Ovary (tissue), 10 donors: ENCODE measurements at regions of chr10 and their contacts with region 1.

Region 1: GRCh38 chr10:110137142-110137545 is 70.3 kb upstream of the MXI1 start:
- DNase-seq: no peak
- H3K4me3 ChIP-seq: no peak overlapping the region
- H3K27ac ChIP-seq: no peak overlapping the region
- H3K4me1 ChIP-seq: peaks cover 3% of the 10 kb centered on the region
- H3K27me3 ChIP-seq: no peaks in the 10 kb centered on the region
- CTCF ChIP-seq: peak; percentile 41 to 94 (median 89)
- EP300 ChIP-seq: no peak
- POLR2A ChIP-seq: peak; percentile 11

Region 2: DNA sequence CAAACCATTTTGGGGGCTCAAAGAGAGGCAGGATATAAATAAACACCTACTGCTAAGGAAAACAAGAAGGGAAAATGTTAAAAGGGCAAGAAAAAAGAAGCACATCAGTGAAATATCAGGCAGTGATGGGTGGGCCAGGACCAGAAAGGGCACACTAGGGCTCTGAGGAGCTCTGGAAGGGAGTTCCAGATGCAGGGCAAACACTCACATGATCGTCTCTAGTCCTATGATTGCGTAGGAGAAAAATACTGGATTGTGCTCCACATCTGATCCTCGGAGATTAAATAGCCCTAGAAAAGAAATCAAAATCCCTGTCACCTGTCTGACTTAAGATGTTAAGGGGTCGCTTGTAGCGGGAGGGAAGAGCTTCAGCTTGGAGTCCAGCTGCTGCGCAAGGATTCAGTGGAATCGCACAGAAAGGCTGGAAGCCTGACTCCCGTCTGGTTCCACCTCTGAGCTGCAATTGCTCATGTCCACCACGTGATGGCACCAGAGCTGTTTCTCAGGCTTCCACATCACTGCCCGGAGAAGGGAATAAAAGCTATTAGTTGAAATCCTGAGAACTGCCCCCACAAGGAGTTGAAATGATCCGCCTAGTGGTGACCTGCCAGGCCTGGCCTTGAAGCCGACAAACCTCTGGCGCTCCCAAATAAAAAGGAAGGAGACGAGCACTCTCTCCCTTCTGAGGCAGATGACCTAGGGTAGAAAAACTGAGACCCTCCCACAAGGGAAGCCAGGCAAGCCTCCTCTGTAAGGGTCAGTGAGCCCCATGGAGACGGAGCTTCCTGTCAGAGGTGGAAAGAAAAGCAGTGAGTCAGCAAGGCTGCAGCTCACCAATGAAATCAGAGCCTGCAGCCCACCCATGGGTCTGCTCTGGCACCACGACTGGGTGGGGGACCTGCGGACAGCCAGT is 253.0 kb before region 1 on chr10:
- intact Hi-C with region 1: loop called (anchors 5 to 10 kb)
- DNase-seq: peak; percentile 80 to 86 (median 81)
- H3K4me3 ChIP-seq: no peak overlapping the region
- H3K27ac ChIP-seq: peak overlapping the region in 1 of 2 donors; percentile 58
- H3K4me1 ChIP-seq: peaks cover 3% of the 10 kb centered on the region
- H3K27me3 ChIP-seq: no peaks in the 10 kb centered on the region
- CTCF ChIP-seq: peak; percentile 94 to 98 (median 97)
- EP300 ChIP-seq: no peak
- POLR2A ChIP-seq: no peak

Region 3: DNA sequence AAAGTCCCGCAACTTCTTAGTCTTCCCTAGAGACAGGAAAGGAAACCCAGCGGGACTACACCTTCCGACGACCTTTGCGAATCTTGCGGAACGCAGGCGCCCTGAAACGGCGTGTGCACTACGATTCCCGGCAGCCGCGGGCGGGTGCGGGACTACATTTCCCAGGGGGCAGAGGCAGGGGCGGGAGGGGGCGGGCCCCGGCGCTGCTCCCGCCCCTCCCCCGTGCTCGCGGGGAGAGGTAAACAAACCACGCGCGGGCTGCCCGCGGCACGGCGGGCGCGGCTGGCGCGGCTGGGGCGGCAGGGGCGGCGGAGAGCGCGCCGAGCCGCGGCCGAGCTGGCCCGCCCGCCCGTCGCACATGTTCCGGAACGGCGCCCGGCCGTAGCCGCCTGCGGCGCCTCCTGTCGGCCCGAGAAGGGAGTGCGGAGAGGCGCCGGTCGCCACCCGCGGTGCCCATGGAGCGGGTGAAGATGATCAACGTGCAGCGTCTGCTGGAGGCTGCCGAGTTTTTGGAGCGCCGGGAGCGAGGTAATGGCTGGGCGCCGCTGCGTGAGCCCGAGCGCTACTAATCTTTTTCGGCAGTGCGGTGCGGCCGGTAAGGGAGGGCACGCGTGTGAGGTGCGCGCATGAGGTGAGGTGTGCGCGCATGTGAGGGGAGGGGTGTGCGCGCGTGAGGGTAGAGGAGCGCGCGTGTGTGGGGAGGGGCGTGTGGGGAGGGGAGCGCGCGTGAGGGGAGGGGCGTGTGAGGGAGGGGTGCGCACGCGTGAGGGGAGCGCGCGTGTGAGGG is 88.8 kb after region 1 on chr10:
- intact Hi-C with region 1: loop called in 1 of 4 experiments (anchors 10 kb)
- DNase-seq: peak; percentile 91 to 94 (median 92)
- H3K4me3 ChIP-seq: peak overlapping the region; percentile 94
- H3K27ac ChIP-seq: peak overlapping the region; percentile 91 to 94
- H3K4me1 ChIP-seq: no peaks in the 10 kb centered on the region
- H3K27me3 ChIP-seq: no peaks in the 10 kb centered on the region
- CTCF ChIP-seq: peak; percentile 53 to 86 (median 79)
- EP300 ChIP-seq: peak; percentile 31
- POLR2A ChIP-seq: no peak

Region 4: DNA sequence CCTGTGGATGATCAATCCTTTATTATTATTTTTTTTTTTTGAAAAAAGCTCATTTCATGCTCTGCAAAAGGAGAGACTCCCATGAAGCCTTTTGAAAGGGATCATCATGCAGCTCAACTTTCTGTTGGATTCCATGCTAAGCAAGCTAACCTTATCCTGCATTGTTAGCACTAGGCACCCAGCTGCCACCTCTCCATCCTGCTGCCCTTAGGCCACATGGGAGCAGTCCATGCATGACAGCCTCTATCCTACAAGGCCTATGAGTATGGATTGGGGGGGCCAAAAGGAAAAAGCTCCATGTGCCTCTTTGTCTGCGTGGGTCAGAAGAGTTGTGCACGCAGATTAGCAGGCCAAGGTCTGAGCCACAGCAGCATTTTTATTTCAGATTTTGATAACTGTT is 148.4 kb after region 1 on chr10:
- intact Hi-C with region 1: loop called in 1 of 4 experiments (anchors 5 kb)
- DNase-seq: no peak
- H3K4me3 ChIP-seq: no peak overlapping the region
- H3K27ac ChIP-seq: no peak overlapping the region
- H3K4me1 ChIP-seq: peaks cover 3% of the 10 kb centered on the region
- H3K27me3 ChIP-seq: no peaks in the 10 kb centered on the region
- CTCF ChIP-seq: no peak
- EP300 ChIP-seq: no peak
- POLR2A ChIP-seq: no peak

Region 5: DNA sequence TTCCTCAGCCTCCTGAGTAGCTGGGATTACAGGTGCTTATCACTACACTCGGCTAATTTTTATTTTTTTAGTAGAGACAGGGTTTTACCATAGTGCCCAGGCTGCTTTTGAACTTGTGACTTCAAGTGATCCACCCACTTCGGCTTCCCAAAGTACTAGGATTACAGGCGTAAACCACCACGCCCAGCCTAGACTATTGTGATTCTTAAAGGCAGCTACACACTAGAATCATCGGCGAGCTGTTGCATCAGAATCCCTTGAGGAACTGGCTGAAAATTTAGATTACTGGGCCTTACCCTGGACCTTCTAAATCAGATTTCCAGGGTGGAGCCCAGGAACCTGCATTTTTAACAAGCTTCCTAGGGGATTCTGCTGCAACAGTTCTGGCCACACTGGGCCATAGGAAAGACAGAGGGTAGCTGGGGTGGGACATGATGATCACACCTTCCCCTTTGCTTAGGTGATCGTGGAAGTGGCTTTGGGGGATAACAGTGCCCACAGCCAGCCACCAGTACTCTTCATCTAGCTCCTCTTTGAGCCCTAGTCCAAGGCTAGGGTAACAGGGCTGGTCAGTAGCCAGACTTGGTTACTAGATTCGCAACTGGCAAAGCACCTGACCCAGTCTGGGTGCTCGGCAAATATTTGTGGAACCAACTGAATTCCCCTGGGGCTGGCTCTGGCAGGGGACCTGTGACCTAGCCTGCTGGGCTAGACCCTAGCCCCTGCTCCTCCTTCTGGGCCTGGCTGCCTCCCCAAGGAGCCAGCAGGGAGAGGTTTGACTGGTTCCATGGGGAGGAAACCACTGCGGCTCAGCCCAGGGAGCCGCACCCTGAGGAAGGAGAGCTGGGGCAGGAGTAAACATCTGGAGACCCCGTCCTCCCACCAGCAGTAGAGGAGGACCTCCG is 293.5 kb after region 1 on chr10:
- intact Hi-C with region 1: no loop called
- DNase-seq: no peak
- H3K4me3 ChIP-seq: no peak overlapping the region
- H3K27ac ChIP-seq: no peak overlapping the region
- H3K4me1 ChIP-seq: peaks cover 4% of the 10 kb centered on the region
- H3K27me3 ChIP-seq: no peaks in the 10 kb centered on the region
- CTCF ChIP-seq: no peak
- EP300 ChIP-seq: no peak
- POLR2A ChIP-seq: no peak

Region 6: GRCh38 chr10:110556969-110557601 is 419.9 kb after region 1 on chr10:
- intact Hi-C with region 1: loop called in 1 of 4 experiments (anchors 10 kb)
- DNase-seq: peak in 2 of 5 donors; percentile 29 to 38
- H3K4me3 ChIP-seq: no peak overlapping the region
- H3K27ac ChIP-seq: no peak overlapping the region
- H3K4me1 ChIP-seq: no peaks in the 10 kb centered on the region
- H3K27me3 ChIP-seq: no peaks in the 10 kb centered on the region
- CTCF ChIP-seq: peak in 1 of 3 donors; percentile 17
- EP300 ChIP-seq: no peak
- POLR2A ChIP-seq: no peak